ENCODE measurements at regions of chr19 and their contacts with region 1.

Region 1: DNA sequence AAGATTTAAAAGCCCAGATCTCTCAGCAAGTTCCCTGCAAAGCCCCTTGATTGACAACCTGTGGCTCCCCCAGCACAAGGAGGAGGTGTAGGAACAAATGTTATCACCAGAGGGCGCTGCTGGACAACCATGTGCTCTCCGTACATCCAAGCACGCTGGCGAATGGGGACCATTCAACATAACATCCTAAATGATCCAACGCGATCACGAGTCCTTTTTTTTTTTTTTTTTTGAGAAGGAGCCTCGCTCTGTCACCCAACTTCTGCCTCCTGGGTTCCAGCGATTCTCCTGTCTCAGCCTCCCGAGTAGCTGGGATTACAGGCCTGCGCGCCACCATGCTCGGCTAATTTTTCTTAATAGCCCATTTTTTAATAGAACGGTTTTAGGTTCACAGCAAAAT is 52.0 kb downstream of the NWD1 start:
- DNase-seq: peak; percentile 96
- H3K4me3 ChIP-seq: no peak overlapping the region
- H3K27ac ChIP-seq: no peak overlapping the region
- H3K4me1 ChIP-seq: no peaks in the 10 kb centered on the region
- H3K27me3 ChIP-seq: no peaks in the 10 kb centered on the region
- CTCF ChIP-seq: peak; percentile 87 to 91 (median 89)
- POLR2A ChIP-seq: no peak

Region 2: GRCh38 chr19:16637535-16637934 is 134.1 kb before region 1 on chr19:
- intact Hi-C with region 1: no loop called
- DNase-seq: no peak
- H3K4me3 ChIP-seq: no peak overlapping the region
- H3K27ac ChIP-seq: no peak overlapping the region
- H3K4me1 ChIP-seq: no peaks in the 10 kb centered on the region
- H3K27me3 ChIP-seq: no peaks in the 10 kb centered on the region
- CTCF ChIP-seq: no peak
- POLR2A ChIP-seq: no peak

Region 3: DNA sequence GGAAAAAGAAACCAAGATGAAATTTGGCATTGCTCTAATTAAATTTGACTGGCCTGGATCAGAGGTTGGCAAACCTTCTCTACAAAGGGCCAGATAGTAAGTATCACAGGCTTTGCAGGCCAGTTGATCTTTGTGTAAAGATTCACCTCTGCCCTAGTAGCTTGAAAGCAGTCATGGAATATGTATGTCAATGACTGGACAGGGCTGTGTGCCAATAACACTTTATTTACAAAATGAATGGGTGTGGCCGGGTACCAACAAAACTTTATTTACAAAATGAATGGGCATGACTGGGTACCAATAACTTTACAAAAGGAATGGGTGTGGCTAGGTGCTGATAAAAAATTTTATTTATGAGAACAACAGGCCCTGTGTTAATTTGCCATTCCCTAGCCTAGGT is 77.6 kb after region 1 on chr19:
- intact Hi-C with region 1: no loop called
- DNase-seq: no peak
- H3K4me3 ChIP-seq: no peak overlapping the region
- H3K27ac ChIP-seq: no peak overlapping the region
- H3K4me1 ChIP-seq: peaks cover 23% of the 10 kb centered on the region
- H3K27me3 ChIP-seq: no peaks in the 10 kb centered on the region
- CTCF ChIP-seq: no peak
- POLR2A ChIP-seq: no peak

Region 4: GRCh38 chr19:17052439-17053210 is 281.0 kb after region 1 on chr19:
- intact Hi-C with region 1: loop called (anchors 10 kb)
- DNase-seq: peak; percentile 72
- H3K4me3 ChIP-seq: no peak overlapping the region
- H3K27ac ChIP-seq: no peak overlapping the region
- H3K4me1 ChIP-seq: peaks cover 6% of the 10 kb centered on the region
- H3K27me3 ChIP-seq: no peaks in the 10 kb centered on the region
- CTCF ChIP-seq: peak; percentile 54 to 80 (median 64)
- POLR2A ChIP-seq: no peak